Heart left ventricle (tissue), 16 donors: ENCODE measurements at regions of chr7 and their contacts with region 1.

Region 1: DNA sequence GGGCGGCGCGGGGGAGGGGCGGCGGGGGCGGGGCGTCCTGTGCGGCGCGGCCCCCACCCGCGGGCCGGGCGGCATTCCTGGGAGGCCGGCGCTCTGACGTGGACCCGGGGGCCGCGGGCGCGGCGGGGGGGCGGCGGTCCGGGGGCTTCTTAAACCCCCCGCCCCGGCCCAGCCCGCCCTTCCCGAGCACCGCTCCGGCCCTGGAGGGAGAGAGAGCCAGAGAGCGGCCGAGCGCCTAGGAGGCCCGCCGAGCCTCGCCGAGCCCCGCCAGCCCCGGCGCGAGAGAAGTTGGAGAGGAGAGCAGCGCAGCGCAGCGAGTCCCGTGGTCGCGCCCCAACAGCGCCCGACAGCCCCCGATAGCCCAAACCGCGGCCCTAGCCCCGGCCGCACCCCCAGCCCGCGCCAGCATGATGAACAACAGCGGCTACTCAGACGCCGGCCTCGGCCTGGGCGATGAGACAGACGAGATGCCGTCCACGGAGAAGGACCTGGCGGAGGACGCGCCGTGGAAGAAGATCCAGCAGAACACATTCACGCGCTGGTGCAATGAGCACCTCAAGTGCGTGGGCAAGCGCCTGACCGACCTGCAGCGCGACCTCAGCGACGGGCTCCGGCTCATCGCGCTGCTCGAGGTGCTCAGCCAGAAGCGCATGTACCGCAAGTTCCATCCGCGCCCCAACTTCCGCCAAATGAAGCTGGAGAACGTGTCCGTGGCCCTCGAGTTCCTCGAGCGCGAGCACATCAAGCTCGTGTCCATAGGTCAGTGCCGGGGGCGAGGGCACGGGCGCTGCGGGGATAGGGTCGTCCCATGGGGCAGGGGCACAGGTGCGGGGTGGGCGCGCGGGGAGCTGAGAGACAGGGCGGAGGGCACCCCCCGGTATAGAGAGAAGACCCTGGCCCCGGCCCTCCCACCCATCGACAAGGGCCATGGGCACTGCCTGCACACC is at the start of gene FLNC:
- DNase-seq: peak; percentile 71 to 81 (median 78)
- ATAC-seq: peak in 2 of 4 donors; percentile 5 to 23
- H3K4me3 ChIP-seq: peak within 1 kb of the TSS; percentile 31 to 94 (median 80)
- H3K27ac ChIP-seq: peak within 1 kb of the TSS; percentile 84 to 100 (median 96)
- H3K4me1 ChIP-seq: peaks cover 0 to 76% (median 45%) of the 10 kb centered on the region in 12 donors
- H3K27me3 ChIP-seq: peaks cover 0 to 31% (median 0%) of the 10 kb centered on the region in 9 donors
- CTCF ChIP-seq: no peak
- POLR2A ChIP-seq: peak; percentile 72 to 96
- total RNA-seq, gene FLNC: 721 to 3,687 (median 1,170) TPM

Region 2: DNA sequence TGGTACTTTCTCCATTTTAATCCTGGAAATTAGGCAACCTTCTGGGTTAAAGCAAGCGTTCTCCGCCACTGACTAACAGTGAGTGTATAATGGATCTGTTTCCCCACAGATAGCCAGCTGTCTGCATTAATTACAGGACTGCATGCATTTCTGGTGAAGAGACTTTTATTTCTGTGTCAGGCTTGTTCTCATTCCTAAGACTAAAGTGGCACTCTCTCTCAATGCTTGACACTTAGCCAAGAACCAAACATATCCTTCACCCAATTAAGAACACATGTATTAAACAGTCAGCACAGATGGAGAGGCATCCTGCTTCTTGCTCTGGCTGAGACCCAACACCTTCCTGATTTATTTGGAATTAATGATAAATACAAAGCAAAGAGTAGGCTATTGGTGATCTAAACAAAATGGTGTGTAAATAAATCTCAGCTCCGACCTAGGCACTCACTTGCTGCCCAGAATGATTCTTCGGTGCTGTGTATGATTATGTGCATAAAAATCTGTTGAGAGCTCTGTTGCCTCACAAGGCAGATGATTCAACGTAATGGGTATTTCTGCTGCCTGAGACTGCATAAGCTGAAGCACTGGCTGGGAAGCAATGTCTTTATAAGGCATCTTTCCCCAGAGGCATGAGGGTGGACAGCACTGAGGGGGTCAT is 74.6 kb before region 1 on chr7:
- intact Hi-C with region 1: loop called in 2 of 10 experiments (anchors 5 to 10 kb)
- DNase-seq: no peak
- ATAC-seq: peak; percentile 39 to 78 (median 60)
- H3K4me3 ChIP-seq: no peak overlapping the region
- H3K27ac ChIP-seq: peak overlapping the region; percentile 27 to 85 (median 60)
- H3K4me1 ChIP-seq: peaks cover 4 to 44% (median 18%) of the 10 kb centered on the region in 12 donors
- H3K27me3 ChIP-seq: no peaks in the 10 kb centered on the region
- CTCF ChIP-seq: no peak
- POLR2A ChIP-seq: no peak

Region 3: DNA sequence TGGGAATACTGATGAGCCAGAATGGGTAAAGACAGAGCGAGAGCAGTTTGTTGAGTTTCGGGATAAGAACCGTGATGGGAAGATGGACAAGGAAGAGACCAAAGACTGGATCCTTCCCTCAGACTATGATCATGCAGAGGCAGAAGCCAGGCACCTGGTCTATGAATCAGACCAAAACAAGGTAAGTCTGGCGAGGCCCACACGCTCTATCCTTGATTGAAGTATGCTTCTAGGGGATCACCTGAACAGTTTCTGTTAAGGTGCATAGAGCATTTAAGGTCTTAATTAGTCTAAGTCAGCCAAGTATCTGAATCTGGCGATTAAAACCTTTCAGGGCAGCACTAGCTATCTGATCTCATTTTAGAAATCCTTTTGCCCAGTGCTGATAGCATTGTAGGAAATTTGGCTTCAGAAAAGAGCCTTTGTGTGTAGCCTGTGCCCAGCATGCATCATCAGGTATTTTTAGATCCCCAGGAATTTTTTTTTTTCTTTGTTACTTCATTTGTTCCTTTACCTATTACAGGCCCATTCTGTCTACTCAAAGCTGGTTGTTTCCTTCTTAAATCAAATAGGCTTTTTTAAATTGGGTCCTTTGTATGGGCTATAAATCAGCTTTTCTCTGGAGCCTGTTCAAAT is 62.9 kb before region 1 on chr7:
- intact Hi-C with region 1: no loop called
- DNase-seq: no peak
- ATAC-seq: peak; percentile 62 to 75 (median 70)
- H3K4me3 ChIP-seq: no peak overlapping the region
- H3K27ac ChIP-seq: peak overlapping the region in 11 of 12 donors; percentile 18 to 76 (median 42)
- H3K4me1 ChIP-seq: peaks cover 0 to 29% (median 5%) of the 10 kb centered on the region in 12 donors
- H3K27me3 ChIP-seq: no peaks in the 10 kb centered on the region
- CTCF ChIP-seq: no peak
- POLR2A ChIP-seq: no peak

Region 4: GRCh38 chr7:128852537-128853254 is 22.2 kb after region 1 on chr7:
- intact Hi-C with region 1: no loop called
- DNase-seq: no peak
- ATAC-seq: no peak
- H3K4me3 ChIP-seq: no peak overlapping the region
- H3K27ac ChIP-seq: peak overlapping the region in 1 of 12 donors; percentile 24
- H3K4me1 ChIP-seq: peaks cover 0 to 12% (median 0%) of the 10 kb centered on the region in 12 donors
- H3K27me3 ChIP-seq: no peaks in the 10 kb centered on the region
- CTCF ChIP-seq: no peak
- POLR2A ChIP-seq: no peak

Region 5: DNA sequence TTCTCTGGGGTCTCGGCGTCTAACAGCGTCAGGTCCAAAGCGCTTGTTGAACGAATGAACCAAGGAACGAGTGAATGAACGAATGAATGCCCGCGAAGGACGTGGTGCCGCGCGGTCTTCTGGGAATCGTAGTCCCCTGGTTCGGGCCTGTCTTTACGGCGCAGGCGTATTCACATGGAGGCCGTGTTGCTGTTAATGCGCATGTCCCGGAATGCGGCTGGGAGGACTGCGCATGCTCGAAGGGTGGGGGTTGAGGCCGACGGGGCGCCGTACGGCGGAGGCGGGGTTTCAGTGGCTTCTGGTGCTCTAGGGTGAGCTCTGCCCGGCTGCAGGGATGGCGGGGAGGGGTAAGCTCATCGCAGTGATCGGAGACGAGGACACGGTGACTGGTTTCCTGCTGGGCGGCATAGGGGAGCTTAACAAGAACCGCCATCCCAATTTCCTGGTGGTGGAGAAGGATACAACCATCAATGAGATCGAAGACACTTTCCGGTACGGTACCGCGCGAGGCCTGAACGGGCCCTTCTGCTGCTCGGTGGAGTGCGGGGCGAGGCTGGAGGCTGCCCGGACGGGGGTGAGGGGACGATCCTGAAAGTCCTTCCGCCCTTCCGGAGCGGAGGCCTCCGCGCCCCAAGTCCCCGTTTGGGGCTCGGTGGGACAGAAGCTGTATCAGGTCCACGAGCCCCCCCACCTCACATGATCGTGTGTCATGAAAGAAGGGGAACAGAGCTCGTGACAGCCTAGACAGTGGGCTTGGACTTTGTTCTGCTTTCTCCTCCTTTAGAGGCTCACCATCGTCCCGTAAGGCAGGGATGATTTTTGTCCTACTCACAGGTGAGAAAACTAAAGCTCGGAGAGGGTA is 32.3 kb after region 1 on chr7 and contains the start of gene ATP6V1F:
- intact Hi-C with region 1: loop called in 2 of 10 experiments (anchors 2 to 5 kb)
- DNase-seq: peak; percentile 97 to 100 (median 98)
- ATAC-seq: peak; percentile 80 to 87 (median 84)
- H3K4me3 ChIP-seq: peak within 1 kb of the TSS; percentile 39 to 91 (median 82)
- H3K27ac ChIP-seq: peak within 1 kb of the TSS in 11 of 12 donors; percentile 47 to 87 (median 73)
- H3K4me1 ChIP-seq: peaks cover 3 to 58% (median 43%) of the 10 kb centered on the region in 12 donors
- H3K27me3 ChIP-seq: no peaks in the 10 kb centered on the region
- CTCF ChIP-seq: peak in 1 of 12 donors; percentile 5
- POLR2A ChIP-seq: peak in 1 of 2 donors; percentile 79
- total RNA-seq, gene ATP6V1F: 91.6 to 165 (median 121) TPM

Region 6: GRCh38 chr7:128869138-128869943 is 38.8 kb after region 1 on chr7:
- intact Hi-C with region 1: loop called in 1 of 10 experiments (anchors 5 kb)
- DNase-seq: peak; percentile 55 to 83 (median 59)
- ATAC-seq: peak; percentile 12 to 75 (median 58)
- H3K4me3 ChIP-seq: peak overlapping the region; percentile 45 to 70 (median 63)
- H3K27ac ChIP-seq: peak overlapping the region in 3 of 12 donors; percentile 15 to 55 (median 38)
- H3K4me1 ChIP-seq: peaks cover 0 to 22% (median 13%) of the 10 kb centered on the region in 12 donors
- H3K27me3 ChIP-seq: peaks cover 0 to 16% (median 0%) of the 10 kb centered on the region in 9 donors
- CTCF ChIP-seq: peak in 7 of 12 donors; percentile 9 to 46 (median 32)
- POLR2A ChIP-seq: no peak

Region 7: GRCh38 chr7:128974241-128974934 is 143.9 kb after region 1 on chr7:
- intact Hi-C with region 1: no loop called
- DNase-seq: no peak
- ATAC-seq: no peak
- H3K4me3 ChIP-seq: no peak overlapping the region
- H3K27ac ChIP-seq: no peak overlapping the region
- H3K4me1 ChIP-seq: no peaks in the 10 kb centered on the region
- H3K27me3 ChIP-seq: no peaks in the 10 kb centered on the region
- CTCF ChIP-seq: no peak
- POLR2A ChIP-seq: no peak

Region 8: DNA sequence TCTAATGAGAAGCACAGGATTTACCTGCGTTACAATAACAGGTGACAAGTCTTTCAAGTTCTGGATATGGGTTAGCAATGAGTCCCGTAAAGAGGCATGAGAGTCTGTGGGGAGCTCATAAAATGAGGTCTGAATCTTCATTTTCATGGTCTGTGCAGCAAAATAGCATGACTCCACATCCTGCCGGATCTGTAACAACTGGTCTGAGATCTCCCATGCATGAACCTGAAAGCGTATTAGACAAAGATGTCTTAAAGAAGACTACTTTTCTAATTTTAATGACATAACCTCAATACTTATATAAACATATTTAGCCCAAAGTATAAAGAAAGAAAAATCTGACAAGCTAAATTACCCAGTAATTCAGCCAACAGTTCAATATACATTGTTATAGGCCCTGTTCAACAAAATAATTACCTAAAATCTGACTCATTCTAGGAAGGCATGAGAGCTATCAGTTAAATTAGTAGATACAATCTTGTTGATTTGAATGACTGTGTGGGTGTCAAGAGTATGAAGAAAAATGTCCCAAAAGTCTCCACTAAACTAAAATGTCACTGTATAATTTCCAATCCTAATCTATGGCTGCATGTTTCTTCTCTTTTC is 187.5 kb after region 1 on chr7:
- intact Hi-C with region 1: no loop called
- DNase-seq: no peak
- ATAC-seq: no peak
- H3K4me3 ChIP-seq: no peak overlapping the region
- H3K27ac ChIP-seq: no peak overlapping the region
- H3K4me1 ChIP-seq: no peaks in the 10 kb centered on the region
- H3K27me3 ChIP-seq: no peaks in the 10 kb centered on the region
- CTCF ChIP-seq: no peak
- POLR2A ChIP-seq: no peak